ENCODE measurements at regions of chr12 and their contacts with region 1.

Region 1: GRCh38 chr12:110549716-110550115 is 33.4 kb downstream of the PPTC7 start:
- DNase-seq: no peak
- ATAC-seq: no peak
- H3K4me3 Mint-ChIP-seq: no peak overlapping the region
- H3K27ac Mint-ChIP-seq: peak overlapping the region; percentile 47
- H3K4me1 Mint-ChIP-seq: peaks cover 48% of the 10 kb centered on the region
- H3K27me3 Mint-ChIP-seq: no peaks in the 10 kb centered on the region
- CTCF ChIP-seq: no peak

Region 2: GRCh38 chr12:110513842-110514241 is 35.9 kb before region 1 on chr12:
- CTCF ChIA-PET with region 1: interaction called, 12 read pairs
- POLR2A ChIA-PET with region 1: no interaction called
- intact Hi-C with region 1: no loop called
- DNase-seq: no peak
- ATAC-seq: no peak
- H3K4me3 Mint-ChIP-seq: no peak overlapping the region
- H3K27ac Mint-ChIP-seq: no peak overlapping the region
- H3K4me1 Mint-ChIP-seq: no peaks in the 10 kb centered on the region
- H3K27me3 Mint-ChIP-seq: no peaks in the 10 kb centered on the region
- CTCF ChIP-seq: no peak

Region 3: GRCh38 chr12:110531741-110532333 is 17.9 kb before region 1 on chr12:
- CTCF ChIA-PET with region 1: interaction called, 14 read pairs
- POLR2A ChIA-PET with region 1: interaction called, 5 read pairs
- intact Hi-C with region 1: no loop called
- DNase-seq: no peak
- ATAC-seq: peak; percentile 71
- H3K4me3 Mint-ChIP-seq: no peak overlapping the region
- H3K27ac Mint-ChIP-seq: peak overlapping the region; percentile 80
- H3K4me1 Mint-ChIP-seq: peaks cover 36% of the 10 kb centered on the region
- H3K27me3 Mint-ChIP-seq: no peaks in the 10 kb centered on the region
- CTCF ChIP-seq: no peak

Region 4: DNA sequence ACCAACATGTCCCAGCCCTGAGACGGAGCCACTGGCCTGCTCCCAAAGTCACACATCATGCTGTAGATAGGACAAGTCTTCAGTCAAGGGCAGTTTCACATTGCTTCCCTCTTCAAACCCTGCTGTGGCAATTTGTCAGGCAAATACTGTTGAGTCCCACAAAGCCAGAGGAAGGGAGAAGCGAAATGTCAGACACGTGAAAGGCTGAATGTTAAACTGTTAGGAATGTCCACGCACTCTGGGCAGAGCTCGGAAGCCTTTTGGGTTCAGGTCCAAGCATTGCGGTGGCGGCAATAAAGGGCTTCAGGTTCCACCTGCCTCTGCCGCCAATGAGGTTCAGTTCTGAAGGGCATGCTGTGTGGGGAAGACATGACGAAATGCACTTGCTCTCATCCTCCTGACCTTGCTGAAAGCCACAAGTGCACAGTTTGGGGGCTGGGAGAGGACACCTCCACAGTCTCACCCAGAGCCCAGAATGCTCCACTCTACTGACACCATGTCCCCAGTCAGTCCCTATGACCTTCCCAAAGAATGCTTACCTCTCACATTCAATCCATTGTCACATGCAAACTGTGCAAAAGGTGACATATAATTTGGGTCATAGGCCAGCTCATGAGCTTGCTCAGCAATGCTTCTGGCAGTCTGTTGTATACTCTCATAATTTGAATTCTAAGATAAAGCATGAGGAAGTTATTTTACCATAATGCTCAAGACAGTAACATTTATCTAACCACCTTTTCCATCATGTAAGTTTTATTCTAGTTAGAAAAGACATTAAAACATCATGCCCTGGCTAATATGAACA is 11.9 kb before region 1 on chr12:
- CTCF ChIA-PET with region 1: interaction called, 14 read pairs
- POLR2A ChIA-PET with region 1: no interaction called
- intact Hi-C with region 1: no loop called
- DNase-seq: no peak
- ATAC-seq: no peak
- H3K4me3 Mint-ChIP-seq: no peak overlapping the region
- H3K27ac Mint-ChIP-seq: no peak overlapping the region
- H3K4me1 Mint-ChIP-seq: peaks cover 32% of the 10 kb centered on the region
- H3K27me3 Mint-ChIP-seq: no peaks in the 10 kb centered on the region
- CTCF ChIP-seq: no peak

Region 5: DNA sequence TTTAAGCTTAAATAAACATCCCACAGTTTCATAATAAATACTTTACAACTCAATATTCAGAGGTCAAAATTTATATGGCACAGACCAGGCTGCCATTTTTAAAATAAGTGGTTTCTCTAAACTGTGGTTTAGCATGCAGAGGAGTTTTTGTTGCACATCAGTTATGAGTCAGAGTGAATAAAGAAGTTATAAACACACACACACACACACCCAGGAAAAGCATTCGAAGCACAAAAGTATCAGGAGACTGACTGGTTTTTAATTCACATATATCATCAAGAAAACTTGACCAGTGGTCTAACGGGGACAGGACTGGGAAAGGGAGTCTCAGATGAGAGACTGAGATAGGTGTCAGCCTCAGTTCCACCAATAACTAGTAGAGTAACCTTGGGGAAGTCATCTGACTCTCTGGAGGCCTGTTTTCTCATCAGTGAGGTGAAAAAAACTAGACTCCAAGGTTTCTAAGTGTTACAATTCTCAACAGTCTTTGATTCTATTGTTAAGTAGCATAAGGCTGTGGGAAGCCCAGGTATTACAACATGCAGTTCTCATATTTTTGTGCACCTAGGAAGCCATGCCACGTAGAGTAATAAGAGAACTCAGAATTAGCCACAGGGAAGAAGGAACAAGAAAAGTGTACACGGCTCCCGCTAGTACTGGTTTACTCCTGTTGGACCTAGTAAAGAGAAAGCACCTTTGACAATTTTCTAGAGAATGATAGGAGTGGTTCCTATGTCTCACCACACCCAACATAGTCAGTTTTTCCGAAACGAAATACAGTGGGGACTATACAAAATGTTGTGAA is 28.2 kb after region 1 on chr12:
- CTCF ChIA-PET with region 1: interaction called, 24 read pairs
- POLR2A ChIA-PET with region 1: interaction called, 4 read pairs
- intact Hi-C with region 1: no loop called
- DNase-seq: peak; percentile 72
- ATAC-seq: peak; percentile 60
- H3K4me3 Mint-ChIP-seq: peak overlapping the region; percentile 92
- H3K27ac Mint-ChIP-seq: peak overlapping the region; percentile 96
- H3K4me1 Mint-ChIP-seq: peaks cover 67% of the 10 kb centered on the region
- H3K27me3 Mint-ChIP-seq: no peaks in the 10 kb centered on the region
- CTCF ChIP-seq: no peak